ENCODE measurements at regions of chr1 and their contacts with region 1.

Region 1: DNA sequence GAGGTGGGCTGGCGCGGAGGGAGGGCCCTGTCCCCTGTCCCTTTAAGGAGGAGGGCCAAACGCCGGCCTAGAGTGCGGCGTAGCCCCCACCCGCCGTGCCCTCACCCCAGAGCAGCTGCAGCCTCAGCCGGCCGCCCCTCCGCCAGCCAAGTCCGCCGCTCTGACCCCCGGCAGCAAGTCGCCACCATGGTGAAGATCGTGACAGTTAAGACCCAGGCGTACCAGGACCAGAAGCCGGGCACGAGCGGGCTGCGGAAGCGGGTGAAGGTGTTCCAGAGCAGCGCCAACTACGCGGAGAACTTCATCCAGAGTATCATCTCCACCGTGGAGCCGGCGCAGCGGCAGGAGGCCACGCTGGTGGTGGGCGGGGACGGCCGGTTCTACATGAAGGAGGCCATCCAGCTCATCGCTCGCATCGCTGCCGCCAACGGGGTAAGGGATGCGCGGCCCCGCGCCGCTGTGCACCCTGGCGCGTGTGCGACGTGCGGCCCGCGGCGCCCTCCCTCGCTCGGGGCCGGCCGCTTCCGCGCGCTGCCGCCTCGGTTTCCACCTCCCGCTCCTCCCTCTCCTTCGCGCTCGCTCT is at the start of gene PGM1:
- DNase-seq: peak; percentile 89
- ATAC-seq: peak; percentile 85
- H3K4me3 Mint-ChIP-seq: peak within 1 kb of the TSS; percentile 97
- H3K27ac Mint-ChIP-seq: peak within 1 kb of the TSS; percentile 96
- H3K4me1 Mint-ChIP-seq: peaks cover 27% of the 10 kb centered on the region
- H3K27me3 Mint-ChIP-seq: no peaks in the 10 kb centered on the region
- total RNA-seq, gene PGM1: 38.8 to 43.8 TPM

Region 2: DNA sequence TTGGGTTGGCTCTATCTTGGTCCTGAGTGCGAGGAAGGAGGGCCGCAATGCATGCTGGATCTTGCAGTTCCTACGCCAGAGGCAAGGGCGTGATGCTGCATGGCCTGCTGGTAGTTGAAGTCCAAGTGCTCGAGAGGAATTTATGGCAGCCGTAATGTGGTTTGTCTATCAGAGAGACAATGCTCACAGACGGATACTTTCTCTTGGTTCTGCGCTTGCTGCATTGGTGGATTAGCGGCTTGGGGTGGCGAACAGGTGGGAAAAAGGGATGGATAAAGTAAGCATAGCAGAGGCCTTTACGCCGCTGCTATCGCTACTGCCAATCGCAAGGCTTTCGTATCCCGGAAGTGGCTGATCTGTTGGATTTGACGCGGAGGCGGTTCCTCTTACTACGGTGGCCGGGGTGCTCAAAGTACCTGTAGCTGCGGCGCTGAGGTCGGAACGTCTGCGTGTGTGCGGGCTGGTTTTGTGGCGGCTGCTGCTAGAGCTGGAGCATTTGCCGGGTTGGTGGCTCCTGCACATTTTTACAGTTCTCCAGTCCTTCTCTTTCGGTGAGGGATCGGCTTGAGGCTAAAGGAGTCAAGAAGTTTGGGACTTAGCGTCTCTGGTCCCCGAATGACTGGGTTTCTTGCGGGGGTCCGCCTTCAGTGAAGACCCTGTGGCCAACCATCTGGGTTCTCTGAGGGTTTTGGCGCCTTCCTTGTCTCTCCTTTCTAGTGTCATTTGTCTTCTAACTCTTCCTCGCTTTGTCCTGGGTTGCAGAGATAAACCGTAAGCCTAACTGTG is 809.5 kb before region 1 on chr1 and contains the start of gene ATG4C:
- CTCF ChIA-PET with region 1: no interaction called
- POLR2A ChIA-PET with region 1: no interaction called
- intact Hi-C with region 1: loop called in 1 of 2 experiments (anchors 2 kb)
- DNase-seq: peak; percentile 96
- ATAC-seq: peak; percentile 99
- H3K4me3 Mint-ChIP-seq: no peak within 1 kb of the TSS
- H3K27ac Mint-ChIP-seq: no peak within 1 kb of the TSS
- H3K4me1 Mint-ChIP-seq: peaks cover 17% of the 10 kb centered on the region
- H3K27me3 Mint-ChIP-seq: peaks cover 10% of the 10 kb centered on the region
- total RNA-seq, gene ATG4C: 16.2 to 17.7 TPM

Region 3: GRCh38 chr1:63487336-63488065 is 105.9 kb before region 1 on chr1:
- CTCF ChIA-PET with region 1: no interaction called
- POLR2A ChIA-PET with region 1: no interaction called
- intact Hi-C with region 1: no loop called
- DNase-seq: no peak
- ATAC-seq: no peak
- H3K4me3 Mint-ChIP-seq: no peak overlapping the region
- H3K27ac Mint-ChIP-seq: no peak overlapping the region
- H3K4me1 Mint-ChIP-seq: no peaks in the 10 kb centered on the region
- H3K27me3 Mint-ChIP-seq: no peaks in the 10 kb centered on the region

Measured in activated CD4-positive, alpha-beta T cell treated with anti-CD3 and anti-CD28 coated beads for 36 hours (primary cell).